ENCODE measurements at regions of chr21 and their contacts with region 1.

Region 1: DNA sequence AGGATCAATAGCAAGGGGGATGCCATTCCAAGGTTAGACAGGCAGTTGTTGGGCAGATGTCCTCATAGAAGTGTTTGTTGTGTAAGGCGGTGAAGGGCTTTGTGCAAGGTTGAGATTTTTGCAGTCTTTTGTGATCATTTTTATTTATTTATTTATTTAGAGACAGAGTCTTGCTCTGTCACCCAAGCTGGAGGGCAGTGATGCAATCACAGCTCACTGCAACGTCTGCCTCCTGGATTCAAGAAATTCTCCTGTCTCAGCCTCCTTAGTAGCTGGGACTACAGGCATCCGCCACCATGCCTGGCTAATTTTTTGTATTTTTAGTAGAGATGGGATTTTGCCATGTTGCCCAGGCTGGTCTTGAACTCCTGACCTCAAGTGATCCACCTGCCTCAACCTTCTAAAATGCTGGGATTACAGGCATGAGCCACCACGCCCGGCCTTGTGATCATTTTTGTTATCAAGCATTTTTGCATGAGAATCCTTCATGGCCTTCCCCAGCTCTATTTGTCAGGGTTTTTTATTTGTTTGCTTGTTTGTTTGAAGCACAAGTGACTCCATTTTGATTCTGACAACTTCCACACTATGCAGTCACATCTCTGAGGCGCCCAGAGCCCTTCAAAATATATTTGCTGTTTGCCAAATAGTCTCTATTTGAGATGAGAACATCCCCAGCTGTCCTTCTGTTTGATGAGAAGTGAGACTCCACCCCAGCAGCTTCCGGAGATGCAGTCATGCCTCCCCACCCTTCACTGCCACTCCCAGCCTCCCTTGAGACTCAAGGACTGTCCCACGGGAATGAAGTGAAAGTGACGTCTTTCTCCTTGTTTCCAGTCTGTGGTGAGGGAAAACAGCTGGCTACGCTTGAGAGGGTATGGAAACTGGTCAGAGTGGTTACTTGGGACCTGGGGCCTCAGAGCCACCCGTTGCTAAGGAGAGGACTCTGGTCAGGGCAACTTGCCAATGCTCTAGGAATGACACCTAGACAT is 38.0 kb downstream of the TMEM50B start:
- DNase-seq: peak in 1 of 2 donors; percentile 71
- H3K4me3 ChIP-seq: no peak overlapping the region
- H3K27ac ChIP-seq: peak overlapping the region in 4 of 5 donors; percentile 15 to 61 (median 24)
- H3K4me1 ChIP-seq: peaks cover 4 to 22% (median 14%) of the 10 kb centered on the region in 4 donors
- H3K27me3 ChIP-seq: no peaks in the 10 kb centered on the region
- CTCF ChIP-seq: no peak
- EP300 ChIP-seq: no peak
- POLR2A ChIP-seq: no peak

Region 2: GRCh38 chr21:33199516-33200217 is 242.1 kb before region 1 on chr21:
- intact Hi-C with region 1: loop called (anchors 5 kb)
- DNase-seq: peak; percentile 83 to 97
- H3K4me3 ChIP-seq: no peak overlapping the region
- H3K27ac ChIP-seq: peak overlapping the region in 4 of 5 donors; percentile 5 to 40 (median 32)
- H3K4me1 ChIP-seq: peaks cover 16 to 56% (median 28%) of the 10 kb centered on the region in 4 donors
- H3K27me3 ChIP-seq: no peaks in the 10 kb centered on the region
- CTCF ChIP-seq: peak in 5 of 7 experiments; percentile 59 to 80 (median 67)
- EP300 ChIP-seq: no peak
- POLR2A ChIP-seq: no peak

Region 3: GRCh38 chr21:33229784-33230544 is 211.8 kb before region 1 on chr21 and contains the start of gene IFNAR2:
- intact Hi-C with region 1: no loop called
- DNase-seq: peak; percentile 80 to 90
- H3K4me3 ChIP-seq: peak within 1 kb of the TSS; percentile 69 to 99 (median 96)
- H3K27ac ChIP-seq: peak within 1 kb of the TSS; percentile 95 to 98 (median 96)
- H3K4me1 ChIP-seq: peaks cover 14 to 49% (median 30%) of the 10 kb centered on the region in 4 donors
- H3K27me3 ChIP-seq: no peaks in the 10 kb centered on the region
- CTCF ChIP-seq: no peak
- EP300 ChIP-seq: no peak
- POLR2A ChIP-seq: no peak
- total RNA-seq, gene IFNAR2: 8.2 to 22.5 (median 12.6) TPM in 4 of 5 donors, not detected in the other

Region 4: DNA sequence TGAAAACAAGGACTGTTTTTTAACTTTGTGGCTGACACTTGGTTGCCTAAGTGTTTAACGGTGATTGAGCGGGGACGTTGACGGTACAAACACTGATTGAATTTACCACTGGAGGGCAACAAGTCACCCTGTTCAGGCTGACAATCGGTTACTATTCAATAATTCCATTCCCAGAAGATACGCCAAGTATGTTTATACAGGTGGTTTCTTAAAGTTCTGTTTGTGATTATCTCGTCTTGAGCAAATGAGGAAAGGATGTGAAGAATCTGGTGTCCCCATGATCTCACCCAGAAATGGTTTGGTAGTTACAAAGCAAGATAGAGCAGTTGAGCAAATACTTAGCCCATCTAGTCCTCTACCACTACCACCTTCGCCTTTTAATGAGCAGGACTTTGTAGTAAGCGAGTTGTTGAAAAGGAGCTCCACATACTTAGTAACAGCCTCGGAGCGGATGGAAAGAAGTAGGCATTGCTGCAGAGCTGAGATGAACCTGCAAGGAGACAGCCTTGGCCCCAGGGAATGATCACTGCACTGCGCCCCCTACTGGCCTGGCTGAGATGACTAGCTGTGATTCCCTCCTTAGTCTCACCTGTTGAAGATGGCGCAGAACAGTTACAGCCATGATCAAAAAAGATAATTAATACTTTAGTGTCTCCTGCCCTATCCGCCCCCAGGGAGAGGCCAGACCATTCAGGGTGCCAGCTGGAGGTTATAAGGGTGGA is 80.7 kb before region 1 on chr21:
- intact Hi-C with region 1: loop called (anchors 10 kb)
- DNase-seq: peak; percentile 82 to 89
- H3K4me3 ChIP-seq: peak overlapping the region; percentile 8 to 22 (median 13)
- H3K27ac ChIP-seq: peak overlapping the region; percentile 49 to 75 (median 57)
- H3K4me1 ChIP-seq: peaks cover 15 to 33% (median 28%) of the 10 kb centered on the region in 4 donors
- H3K27me3 ChIP-seq: no peaks in the 10 kb centered on the region
- CTCF ChIP-seq: peak in 6 of 7 experiments; percentile 25 to 89 (median 75)
- EP300 ChIP-seq: no peak
- POLR2A ChIP-seq: no peak

Region 5: GRCh38 chr21:33505833-33506232 is 64.0 kb after region 1 on chr21:
- intact Hi-C with region 1: no loop called
- DNase-seq: no peak
- H3K4me3 ChIP-seq: no peak overlapping the region
- H3K27ac ChIP-seq: no peak overlapping the region
- H3K4me1 ChIP-seq: no peaks in the 10 kb centered on the region
- H3K27me3 ChIP-seq: no peaks in the 10 kb centered on the region
- CTCF ChIP-seq: no peak
- EP300 ChIP-seq: no peak
- POLR2A ChIP-seq: no peak